Activated CD4-positive, alpha-beta memory T cell treated with anti-CD3 and anti-CD28 coated beads, Interleukin-2, amount 10 ng/mL, durations not matched to agents 7 days and 5 days (primary cell): ENCODE measurements at regions of chr2 and their contacts with region 1.

Region 1: DNA sequence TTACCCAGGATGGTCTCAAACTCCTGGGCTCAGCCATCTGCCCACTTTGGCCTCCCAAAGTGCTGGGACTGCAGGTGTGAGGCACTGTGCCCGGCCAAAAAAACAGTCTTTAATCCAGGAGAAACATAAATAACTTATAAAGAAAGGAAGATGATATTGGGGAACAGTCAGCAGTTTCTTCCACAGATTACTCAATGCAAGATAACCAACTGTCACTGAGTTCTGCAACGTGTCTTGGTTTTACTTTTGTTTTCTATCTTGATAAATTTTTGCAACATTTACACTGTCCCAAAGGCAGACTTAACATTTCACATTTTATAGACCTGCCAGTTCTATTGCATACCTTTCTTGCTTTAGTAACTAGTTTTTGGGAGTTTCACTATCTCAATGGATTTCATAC is 71.1 kb downstream of the ANKRD44 start:
- DNase-seq: no peak
- H3K4me3 Mint-ChIP-seq: peak overlapping the region; percentile 73
- H3K27ac Mint-ChIP-seq: peak overlapping the region; percentile 89
- H3K4me1 Mint-ChIP-seq: peaks cover 85% of the 10 kb centered on the region
- H3K27me3 Mint-ChIP-seq: no peaks in the 10 kb centered on the region

Region 2: DNA sequence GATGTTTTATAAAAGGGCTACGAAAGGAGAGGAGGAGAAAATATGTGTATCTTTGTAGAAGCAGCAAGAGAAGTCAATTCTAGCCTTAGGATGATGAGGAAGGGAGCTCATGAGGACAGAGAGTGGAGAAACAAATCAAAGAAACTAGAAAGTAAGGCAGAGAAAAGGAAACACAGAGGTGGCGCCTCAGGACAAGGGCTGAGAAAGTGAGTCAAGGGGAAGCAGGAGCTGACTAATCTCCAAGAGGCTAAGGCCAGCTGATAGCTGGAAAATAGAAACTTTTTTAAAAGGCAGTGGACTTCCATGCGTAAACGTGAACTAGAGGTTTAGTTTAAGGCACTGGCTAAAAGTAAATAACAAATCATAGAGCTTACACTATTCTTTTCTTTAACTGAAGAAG is 102.2 kb before region 1 on chr2:
- CTCF ChIA-PET with region 1: no interaction called
- POLR2A ChIA-PET with region 1: no interaction called
- DNase-seq: no peak
- H3K4me3 Mint-ChIP-seq: no peak overlapping the region
- H3K27ac Mint-ChIP-seq: peak overlapping the region; percentile 8
- H3K4me1 Mint-ChIP-seq: peaks cover 85% of the 10 kb centered on the region
- H3K27me3 Mint-ChIP-seq: no peaks in the 10 kb centered on the region

Region 3: GRCh38 chr2:197198890-197199289 is 40.5 kb before region 1 on chr2:
- CTCF ChIA-PET with region 1: interaction called, 13 read pairs
- POLR2A ChIA-PET with region 1: interaction called, 73 read pairs
- DNase-seq: peak; percentile 94
- H3K4me3 Mint-ChIP-seq: peak overlapping the region; percentile 79
- H3K27ac Mint-ChIP-seq: peak overlapping the region; percentile 96
- H3K4me1 Mint-ChIP-seq: peaks cover 85% of the 10 kb centered on the region
- H3K27me3 Mint-ChIP-seq: no peaks in the 10 kb centered on the region